ENCODE measurements at regions of chr3 and their contacts with region 1.

Region 1: DNA sequence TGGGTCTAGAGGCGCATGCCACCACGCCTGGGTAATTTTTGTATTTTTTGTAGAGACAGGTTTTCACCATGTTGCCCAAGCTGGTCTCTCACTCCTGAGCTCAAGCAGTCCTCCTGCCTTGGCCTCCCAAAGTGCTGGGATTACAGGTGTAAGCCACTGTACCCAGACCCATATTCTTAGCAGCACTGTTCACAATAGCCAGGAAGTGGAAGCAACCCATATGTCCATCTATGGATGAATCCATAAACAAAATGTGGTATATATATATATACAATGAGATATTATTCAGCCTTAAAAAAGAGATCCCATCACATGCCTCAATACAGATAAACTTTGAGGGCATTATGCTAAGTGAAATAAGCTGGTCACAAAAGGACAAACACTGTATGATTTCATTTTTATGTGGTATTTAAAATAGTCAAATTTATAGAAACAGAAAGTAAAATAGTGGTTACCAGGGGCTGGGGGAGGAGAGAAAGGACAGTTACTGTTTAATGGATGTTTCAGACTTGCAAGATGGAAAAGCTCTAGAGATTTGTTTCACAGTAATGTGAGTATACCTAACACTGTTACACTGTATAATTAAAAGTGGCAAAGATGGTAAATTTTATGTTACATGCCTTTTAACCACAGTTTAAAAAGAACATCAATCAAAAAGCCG is 35.7 kb upstream of the GRAMD1C start:
- DNase-seq: no peak
- ATAC-seq: peak; percentile 85
- H3K4me3 ChIP-seq: no peak overlapping the region
- H3K27ac ChIP-seq: no peak overlapping the region
- H3K4me1 ChIP-seq: peaks cover 9% of the 10 kb centered on the region
- H3K27me3 ChIP-seq: no peaks in the 10 kb centered on the region
- CTCF ChIP-seq: no peak
- EP300 ChIP-seq: no peak
- POLR2A ChIP-seq: no peak
- RAD21 ChIP-seq: no peak

Region 2: GRCh38 chr3:113685956-113686754 is 116.8 kb before region 1 on chr3:
- CTCF ChIA-PET with region 1: no interaction called
- POLR2A ChIA-PET with region 1: no interaction called
- RAD21 ChIA-PET with region 1: no interaction called
- SMC1A ChIA-PET with region 1: no interaction called
- in situ Hi-C with region 1: no loop called
- intact Hi-C with region 1: no loop called
- DNase-seq: no peak
- ATAC-seq: no peak
- H3K4me3 ChIP-seq: no peak overlapping the region
- H3K27ac ChIP-seq: no peak overlapping the region
- H3K4me1 ChIP-seq: no peaks in the 10 kb centered on the region
- H3K27me3 ChIP-seq: no peaks in the 10 kb centered on the region
- CTCF ChIP-seq: no peak
- EP300 ChIP-seq: no peak
- POLR2A ChIP-seq: no peak
- RAD21 ChIP-seq: no peak

Region 3: DNA sequence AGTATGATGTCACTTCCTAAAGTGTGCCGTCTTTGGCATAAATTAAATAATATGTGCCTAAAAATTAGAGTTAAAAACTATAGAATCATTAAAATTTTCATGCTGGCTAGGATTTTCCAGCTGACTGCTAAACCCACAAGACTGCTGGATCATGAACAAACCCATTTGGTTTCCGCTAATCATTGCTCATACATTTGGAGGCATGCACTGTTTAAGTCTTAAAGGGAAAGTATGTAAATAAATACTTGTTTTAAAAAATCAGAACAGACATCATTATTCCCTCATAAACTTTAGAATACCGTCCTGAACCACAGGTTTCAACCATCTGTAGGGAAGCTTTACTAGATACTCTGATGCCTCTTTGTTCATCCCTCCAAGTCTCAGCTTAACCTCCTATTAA is 29.5 kb before region 1 on chr3:
- CTCF ChIA-PET with region 1: no interaction called
- POLR2A ChIA-PET with region 1: no interaction called
- RAD21 ChIA-PET with region 1: no interaction called
- SMC1A ChIA-PET with region 1: no interaction called
- in situ Hi-C with region 1: no loop called
- intact Hi-C with region 1: no loop called
- DNase-seq: no peak
- ATAC-seq: no peak
- H3K4me3 ChIP-seq: no peak overlapping the region
- H3K27ac ChIP-seq: no peak overlapping the region
- H3K4me1 ChIP-seq: no peaks in the 10 kb centered on the region
- H3K27me3 ChIP-seq: no peaks in the 10 kb centered on the region
- CTCF ChIP-seq: no peak
- EP300 ChIP-seq: no peak
- POLR2A ChIP-seq: no peak
- RAD21 ChIP-seq: no peak

Region 4: DNA sequence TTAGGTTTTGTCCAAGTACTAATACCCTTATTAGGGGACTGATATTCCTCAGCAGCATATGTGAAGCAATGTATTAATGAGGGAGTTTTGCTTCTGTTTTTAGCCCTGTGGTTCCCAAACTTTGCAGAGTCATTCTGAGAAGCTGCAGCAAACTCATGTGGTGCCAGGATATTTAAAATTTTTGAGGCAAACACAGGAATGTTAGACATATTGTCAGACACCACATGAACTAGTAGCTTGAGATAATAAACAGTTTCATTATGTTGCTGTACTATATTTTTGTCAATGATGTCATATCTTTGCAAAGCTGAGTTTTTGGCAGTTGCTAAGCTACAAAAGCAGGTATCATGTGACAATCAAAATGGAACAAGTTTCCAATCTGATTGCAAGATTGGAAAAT is 19.5 kb before region 1 on chr3:
- CTCF ChIA-PET with region 1: interaction called, 8 read pairs
- POLR2A ChIA-PET with region 1: interaction called, 3 read pairs
- RAD21 ChIA-PET with region 1: interaction called, 3 read pairs
- SMC1A ChIA-PET with region 1: interaction called, 12 read pairs
- in situ Hi-C with region 1: no loop called
- intact Hi-C with region 1: no loop called
- DNase-seq: no peak
- ATAC-seq: peak; percentile 91
- H3K4me3 ChIP-seq: no peak overlapping the region
- H3K27ac ChIP-seq: no peak overlapping the region
- H3K4me1 ChIP-seq: peaks cover 7% of the 10 kb centered on the region
- H3K27me3 ChIP-seq: no peaks in the 10 kb centered on the region
- CTCF ChIP-seq: no peak
- EP300 ChIP-seq: peak in 1 of 2 experiments; percentile 51; a peak in 1 of 4 replicates
- POLR2A ChIP-seq: no peak
- RAD21 ChIP-seq: no peak

Region 5: GRCh38 chr3:113791381-113791780 is 11.5 kb before region 1 on chr3:
- CTCF ChIA-PET with region 1: interaction called, 7 read pairs
- POLR2A ChIA-PET with region 1: interaction called, 3 read pairs
- RAD21 ChIA-PET with region 1: interaction called, 4 read pairs
- SMC1A ChIA-PET with region 1: interaction called, 14 read pairs
- in situ Hi-C with region 1: no loop called
- intact Hi-C with region 1: no loop called
- DNase-seq: no peak
- ATAC-seq: no peak
- H3K4me3 ChIP-seq: no peak overlapping the region
- H3K27ac ChIP-seq: no peak overlapping the region
- H3K4me1 ChIP-seq: no peaks in the 10 kb centered on the region
- H3K27me3 ChIP-seq: no peaks in the 10 kb centered on the region
- CTCF ChIP-seq: no peak
- EP300 ChIP-seq: no peak
- POLR2A ChIP-seq: no peak
- RAD21 ChIP-seq: no peak

Region 6: GRCh38 chr3:113985541-113985940 is 182.6 kb after region 1 on chr3:
- CTCF ChIA-PET with region 1: no interaction called
- POLR2A ChIA-PET with region 1: no interaction called
- RAD21 ChIA-PET with region 1: no interaction called
- SMC1A ChIA-PET with region 1: no interaction called
- in situ Hi-C with region 1: no loop called
- intact Hi-C with region 1: no loop called
- DNase-seq: peak; percentile 16
- ATAC-seq: peak; percentile 83
- H3K4me3 ChIP-seq: no peak overlapping the region
- H3K27ac ChIP-seq: no peak overlapping the region
- H3K4me1 ChIP-seq: peaks cover 4% of the 10 kb centered on the region; the same call in 1 of the 2 replicates
- H3K27me3 ChIP-seq: no peaks in the 10 kb centered on the region
- CTCF ChIP-seq: no peak
- EP300 ChIP-seq: no peak
- POLR2A ChIP-seq: no peak
- RAD21 ChIP-seq: no peak

Measured in GM12878 (cell line).